ENCODE measurements at regions of chr14 and their contacts with region 1.

Region 1: DNA sequence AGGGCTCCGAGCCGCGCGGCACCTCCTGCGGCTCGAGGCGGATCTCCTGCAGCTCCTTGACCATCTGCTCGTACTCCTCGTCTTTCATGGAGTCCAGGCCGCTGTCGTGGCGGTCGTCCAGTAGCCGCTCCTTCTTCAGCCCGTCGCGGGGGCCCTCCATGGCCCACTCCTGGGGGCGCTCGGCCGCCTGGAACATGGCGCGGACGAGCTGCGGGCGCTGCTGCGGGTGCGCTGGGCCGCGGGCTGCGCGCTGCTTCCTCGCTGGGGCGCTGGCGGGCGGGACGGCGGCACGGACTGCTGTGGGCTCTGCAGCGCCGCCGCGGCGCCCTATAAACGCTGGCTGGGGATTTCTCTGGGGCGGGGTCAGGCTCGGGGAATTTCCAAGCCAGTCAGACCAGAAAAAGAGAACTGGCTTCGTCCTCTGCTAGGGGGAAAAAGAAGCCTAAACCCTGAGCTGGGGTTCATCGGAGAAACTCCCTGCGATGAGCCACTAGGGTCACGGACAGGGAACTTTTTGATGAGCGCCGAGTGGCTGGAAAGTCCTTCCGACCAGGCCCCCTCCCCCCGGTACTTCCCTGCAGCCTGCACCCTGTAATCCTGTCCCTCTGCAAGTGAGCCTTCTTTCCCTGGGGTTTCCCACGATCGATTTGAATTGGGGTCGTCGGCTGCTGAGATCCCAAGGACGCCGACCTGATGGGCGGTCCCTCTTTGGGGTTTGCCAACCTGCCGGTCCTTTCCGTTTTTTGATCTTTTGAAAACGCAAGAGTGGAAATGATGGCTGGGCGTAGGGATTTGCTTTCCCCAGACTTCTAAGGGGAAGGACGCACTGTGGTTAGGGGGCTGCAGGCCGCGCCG is at the start of gene NFKBIA:
- DNase-seq: peak; percentile 88
- H3K4me3 Mint-ChIP-seq: peak within 1 kb of the TSS; percentile 93
- H3K27ac Mint-ChIP-seq: peak within 1 kb of the TSS; percentile 96
- H3K4me1 Mint-ChIP-seq: peaks cover 33% of the 10 kb centered on the region
- H3K27me3 Mint-ChIP-seq: no peaks in the 10 kb centered on the region
- CTCF ChIP-seq: no peak
- total RNA-seq, gene NFKBIA: 74.5 and 112 TPM in 2 replicates

Region 2: DNA sequence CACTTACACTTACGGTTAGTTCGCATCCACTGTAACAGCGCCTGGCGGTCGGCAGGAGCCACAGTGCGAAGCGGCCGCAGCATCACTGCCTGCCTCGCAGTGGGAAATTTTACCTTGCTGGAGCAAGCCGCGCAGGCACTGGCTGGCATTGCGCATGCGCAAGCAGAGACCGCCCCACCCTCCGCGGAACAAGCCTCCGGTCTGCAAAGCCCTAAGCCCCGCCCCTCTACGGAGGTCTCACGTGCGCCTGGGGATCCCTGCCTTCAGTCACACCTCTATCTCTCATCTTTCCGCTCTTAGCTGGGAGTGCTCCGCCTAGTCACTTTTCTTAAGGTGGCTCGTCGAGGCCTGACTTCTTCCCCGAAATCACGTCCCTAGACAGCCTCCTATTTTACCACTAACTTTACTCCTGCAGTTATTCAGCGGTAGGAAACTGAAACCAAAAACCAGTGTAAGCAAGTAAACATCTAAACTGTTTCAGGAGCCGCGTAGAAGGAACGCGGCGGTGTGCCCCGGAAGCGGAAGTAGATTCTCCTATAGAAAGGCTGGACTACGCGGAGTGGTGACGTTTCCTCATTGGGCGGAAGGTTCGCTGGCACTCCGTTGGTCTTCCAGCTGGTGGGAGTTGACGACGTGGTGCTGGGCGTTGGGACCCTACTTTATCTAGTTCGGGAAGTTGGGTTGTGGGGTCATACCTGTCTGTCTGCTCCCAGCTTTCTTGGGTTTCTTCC is 422.1 kb before region 1 on chr14 and contains the start of gene SRP54:
- CTCF ChIA-PET with region 1: interaction called, 3 read pairs
- POLR2A ChIA-PET with region 1: interaction called, 32 read pairs
- intact Hi-C with region 1: no loop called
- DNase-seq: peak; percentile 98
- H3K4me3 Mint-ChIP-seq: no peak within 1 kb of the TSS
- H3K27ac Mint-ChIP-seq: no peak within 1 kb of the TSS
- H3K4me1 Mint-ChIP-seq: peaks cover 5% of the 10 kb centered on the region
- H3K27me3 Mint-ChIP-seq: no peaks in the 10 kb centered on the region
- CTCF ChIP-seq: no peak
- total RNA-seq, gene SRP54: 77.4 and 108 TPM in 2 replicates

Region 3: DNA sequence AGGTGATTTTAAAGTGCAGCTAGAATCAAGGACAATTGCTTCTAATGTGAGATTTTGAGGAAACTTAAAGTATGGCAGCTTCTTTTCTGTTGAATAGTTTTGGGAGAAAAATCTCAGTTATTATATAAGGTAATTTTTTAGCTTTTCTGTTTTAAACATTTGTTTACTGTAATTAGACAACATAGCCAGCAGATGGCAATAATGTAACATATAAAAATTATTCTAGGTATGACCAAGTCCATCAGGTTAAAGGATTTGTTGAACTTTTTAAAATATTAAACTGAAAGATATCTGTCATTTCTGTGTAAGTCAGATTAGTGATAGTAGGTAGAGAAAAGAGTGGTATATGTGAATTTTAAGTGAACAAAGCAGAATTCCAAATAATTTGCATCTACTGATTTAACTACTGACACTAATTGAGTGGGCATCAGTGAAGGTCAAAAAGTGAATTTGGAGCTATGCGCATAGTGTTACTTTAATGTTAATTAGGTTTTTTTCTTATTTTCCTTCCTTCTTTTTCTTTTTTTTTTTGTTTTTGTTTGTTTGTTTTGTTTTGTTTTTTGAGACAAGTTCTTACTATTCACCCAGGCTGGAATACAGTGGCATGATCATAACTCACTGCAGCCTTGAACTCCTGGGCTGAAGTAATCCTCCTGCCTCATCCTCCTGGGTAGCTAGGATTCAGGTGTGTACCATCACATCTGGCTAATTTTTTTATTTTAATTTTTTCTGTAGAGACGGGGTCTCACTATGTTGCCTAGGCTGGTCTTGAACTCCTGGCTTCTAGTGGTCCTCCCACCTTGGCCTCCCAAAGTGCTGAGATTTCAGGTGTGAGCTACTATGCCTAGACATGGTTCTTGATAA is 263.7 kb before region 1 on chr14:
- CTCF ChIA-PET with region 1: interaction called, 13 read pairs
- POLR2A ChIA-PET with region 1: interaction called, 10 read pairs
- intact Hi-C with region 1: loop called (anchors 1 kb)
- DNase-seq: no peak
- H3K4me3 Mint-ChIP-seq: no peak overlapping the region
- H3K27ac Mint-ChIP-seq: no peak overlapping the region
- H3K4me1 Mint-ChIP-seq: peaks cover 4% of the 10 kb centered on the region
- H3K27me3 Mint-ChIP-seq: no peaks in the 10 kb centered on the region
- CTCF ChIP-seq: peak; percentile 19

Region 4: DNA sequence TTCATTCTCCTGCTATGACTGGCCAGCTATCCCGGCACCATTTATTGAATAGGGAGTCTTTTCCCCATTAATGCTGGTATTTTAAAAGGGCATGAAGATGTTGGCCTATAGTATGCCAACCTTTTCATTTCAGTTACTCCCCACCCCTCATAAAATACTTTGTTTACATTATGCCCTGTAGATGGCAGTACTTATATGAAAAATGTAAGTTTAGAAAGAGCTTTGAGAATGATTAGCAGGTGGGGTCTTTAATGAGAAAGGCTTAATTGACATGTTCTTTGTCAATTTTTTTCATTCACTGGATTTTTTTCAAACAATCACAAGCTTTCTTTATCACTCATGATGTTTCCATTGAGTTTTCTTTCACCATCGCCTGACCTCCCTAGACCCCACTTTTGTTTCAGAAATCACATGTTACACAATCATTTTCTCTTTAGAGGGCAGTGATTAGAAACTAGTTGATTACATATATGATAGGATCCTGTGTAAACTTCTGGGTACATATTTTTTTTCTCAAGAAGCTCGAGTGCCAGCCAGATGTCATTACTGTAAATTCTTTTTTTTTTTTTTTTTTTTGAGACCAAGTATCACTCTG is 175.1 kb before region 1 on chr14:
- CTCF ChIA-PET with region 1: interaction called, 36 read pairs
- POLR2A ChIA-PET with region 1: interaction called, 113 read pairs
- intact Hi-C with region 1: loop called (anchors 1 kb)
- DNase-seq: peak; percentile 24
- H3K4me3 Mint-ChIP-seq: no peak overlapping the region
- H3K27ac Mint-ChIP-seq: peak overlapping the region; percentile 35
- H3K4me1 Mint-ChIP-seq: peaks cover 23% of the 10 kb centered on the region
- H3K27me3 Mint-ChIP-seq: no peaks in the 10 kb centered on the region
- CTCF ChIP-seq: peak; percentile 34

Region 5: DNA sequence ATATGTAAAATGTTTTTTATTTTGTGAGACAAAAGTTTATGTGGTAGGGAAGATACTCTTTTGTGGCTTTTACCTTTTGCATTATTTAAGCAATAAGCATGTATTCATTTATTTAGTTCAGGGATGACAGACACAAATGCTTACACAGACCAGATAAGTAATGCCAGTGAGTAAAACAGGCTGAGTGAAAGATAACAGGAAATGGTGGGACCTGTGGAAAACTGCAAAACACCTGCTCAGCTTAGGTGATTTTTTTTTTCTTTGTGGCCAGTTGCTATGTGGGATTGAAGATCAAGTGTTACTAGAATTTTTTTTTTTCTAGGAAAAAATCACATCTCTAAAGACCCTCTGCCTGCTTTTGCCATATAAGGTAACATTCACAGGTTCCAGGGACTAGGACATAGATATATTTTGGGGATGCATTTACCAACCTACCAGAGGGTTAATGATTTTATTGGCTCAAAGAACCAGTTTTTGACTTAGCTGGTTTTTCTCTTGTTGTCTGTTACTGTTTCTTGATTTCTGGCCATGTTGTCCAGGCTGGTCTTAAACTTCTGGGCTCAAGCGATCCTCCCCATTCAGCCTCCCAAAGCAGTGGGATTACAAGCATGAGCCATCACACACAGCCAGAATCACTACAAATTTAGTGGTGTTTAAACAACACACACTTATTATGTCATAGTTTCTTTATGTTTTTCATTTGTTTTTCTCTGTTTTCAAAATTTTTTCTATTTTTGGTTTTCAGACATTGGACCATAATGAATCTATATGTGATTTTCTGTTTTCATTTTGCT is 102.7 kb before region 1 on chr14:
- CTCF ChIA-PET with region 1: interaction called, 5 read pairs
- POLR2A ChIA-PET with region 1: interaction called, 10 read pairs
- intact Hi-C with region 1: no loop called
- DNase-seq: no peak
- H3K4me3 Mint-ChIP-seq: no peak overlapping the region
- H3K27ac Mint-ChIP-seq: peak overlapping the region; percentile 73
- H3K4me1 Mint-ChIP-seq: peaks cover 32% of the 10 kb centered on the region
- H3K27me3 Mint-ChIP-seq: no peaks in the 10 kb centered on the region
- CTCF ChIP-seq: no peak

Region 6: DNA sequence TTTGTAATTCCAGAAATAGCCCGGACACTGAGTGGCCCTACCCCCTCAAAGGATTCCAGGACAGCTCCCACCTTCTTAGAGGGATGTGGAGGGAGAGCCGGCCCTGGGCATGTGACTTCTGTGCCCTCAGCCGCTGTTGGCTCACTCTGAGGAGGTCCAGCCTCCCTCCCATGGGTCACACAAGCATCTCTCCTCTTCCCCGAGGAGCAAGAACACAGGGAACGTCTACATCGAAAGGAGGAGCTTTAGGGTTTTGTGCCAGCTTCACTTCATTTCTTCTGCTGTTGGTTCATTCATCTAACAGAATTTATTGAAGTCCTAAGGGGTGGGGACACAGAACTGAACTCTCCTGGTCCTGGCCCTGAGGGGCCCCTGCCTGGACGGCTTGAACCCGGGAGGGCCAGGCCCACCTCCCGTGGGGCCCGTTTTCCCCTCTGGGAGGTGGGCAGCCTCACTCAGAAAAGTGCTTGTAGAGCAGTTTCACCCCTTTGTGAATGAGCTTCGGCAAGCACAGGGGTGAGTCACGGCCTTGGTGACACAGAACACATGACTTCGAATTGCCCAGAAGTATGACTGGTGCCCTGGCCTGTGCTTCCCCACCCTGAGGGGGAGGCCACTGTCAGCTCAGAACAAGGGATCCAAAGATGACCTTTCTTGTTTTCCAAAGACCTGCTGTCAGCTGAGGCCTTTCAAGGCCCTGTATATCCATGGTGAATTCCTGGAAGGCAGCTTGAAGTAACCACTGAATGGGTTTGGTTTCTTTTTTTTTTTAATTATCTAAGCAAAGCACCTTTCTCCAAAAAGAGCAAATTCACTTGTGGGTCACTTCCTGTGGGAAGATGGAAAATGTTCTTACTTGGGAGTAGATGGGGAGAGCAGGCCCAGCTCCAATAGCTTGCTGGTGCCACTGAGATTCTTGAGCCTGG is 39.3 kb before region 1 on chr14:
- CTCF ChIA-PET with region 1: interaction called, 6 read pairs
- POLR2A ChIA-PET with region 1: interaction called, 348 read pairs
- intact Hi-C with region 1: no loop called
- DNase-seq: peak; percentile 82
- H3K4me3 Mint-ChIP-seq: no peak overlapping the region
- H3K27ac Mint-ChIP-seq: peak overlapping the region; percentile 81
- H3K4me1 Mint-ChIP-seq: peaks cover 5% of the 10 kb centered on the region
- H3K27me3 Mint-ChIP-seq: no peaks in the 10 kb centered on the region
- CTCF ChIP-seq: no peak

Region 7: GRCh38 chr14:35390577-35391387 is 13.9 kb before region 1 on chr14:
- CTCF ChIA-PET with region 1: interaction called, 14 read pairs
- POLR2A ChIA-PET with region 1: interaction called, 49 read pairs
- intact Hi-C with region 1: no loop called
- DNase-seq: peak; percentile 70
- H3K4me3 Mint-ChIP-seq: no peak overlapping the region
- H3K27ac Mint-ChIP-seq: no peak overlapping the region
- H3K4me1 Mint-ChIP-seq: peaks cover 19% of the 10 kb centered on the region
- H3K27me3 Mint-ChIP-seq: no peaks in the 10 kb centered on the region
- CTCF ChIP-seq: no peak